GM10248 (cell line): ENCODE measurements at regions of chr3 and their contacts with region 1.

Region 1: DNA sequence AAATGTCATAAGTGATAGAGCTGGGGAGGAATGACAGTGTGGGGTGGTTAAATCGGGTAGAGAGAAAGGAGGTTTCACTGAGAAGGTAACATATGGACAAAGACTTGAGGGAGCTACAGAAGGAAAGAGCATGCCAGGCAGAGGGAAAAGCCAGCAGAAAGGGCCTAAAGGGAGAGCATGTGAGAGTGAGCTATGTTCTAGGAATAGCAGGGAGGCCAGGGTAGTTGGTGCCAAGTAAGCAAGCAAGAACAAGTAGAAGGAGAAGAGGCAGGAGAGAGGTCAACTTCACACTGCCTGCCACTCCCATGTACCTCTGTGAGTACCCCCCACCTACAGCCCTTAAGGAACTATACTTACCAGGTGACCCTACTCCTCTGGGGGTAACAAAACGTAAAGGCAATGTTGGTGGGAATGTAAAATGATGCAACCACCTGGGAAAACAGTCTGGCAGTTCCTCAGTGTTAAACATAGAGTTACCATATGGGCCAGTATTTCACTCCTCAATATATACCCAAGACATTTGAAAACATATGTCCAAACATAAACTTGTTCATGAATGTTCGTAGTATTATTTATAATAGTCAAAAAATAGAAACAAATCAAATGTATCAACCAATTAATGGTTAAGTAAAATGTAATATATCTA is 67.6 kb downstream of the SFMBT1 start:
- DNase-seq: no peak
- CTCF ChIP-seq: no peak

Region 2: GRCh38 chr3:52959773-52960172 is 18.5 kb before region 1 on chr3:
- CTCF ChIA-PET with region 1: interaction called, 10 read pairs
- POLR2A ChIA-PET with region 1: no interaction called
- DNase-seq: no peak
- CTCF ChIP-seq: no peak

Region 3: DNA sequence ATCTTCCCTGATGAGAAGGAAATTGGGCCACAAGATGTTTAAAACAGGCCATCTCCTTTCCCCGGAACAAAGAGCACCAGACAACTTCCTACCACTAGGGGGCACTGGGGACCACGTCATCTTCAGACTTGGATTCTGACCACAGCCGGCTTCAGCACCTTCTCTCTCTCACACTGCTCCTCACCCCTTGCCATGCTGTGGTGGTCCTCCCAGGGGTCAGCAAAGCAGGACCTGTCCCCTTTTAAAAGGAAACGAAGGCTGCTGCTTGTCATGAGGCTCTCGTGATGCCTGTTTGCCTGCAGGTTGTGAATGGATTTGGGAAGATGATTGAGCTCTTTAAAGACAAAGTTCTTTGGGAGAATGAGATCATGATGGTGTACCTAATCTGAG is 135.8 kb after region 1 on chr3:
- CTCF ChIA-PET with region 1: no interaction called
- POLR2A ChIA-PET with region 1: no interaction called
- DNase-seq: peak; percentile 84
- CTCF ChIP-seq: peak; percentile 89